ENCODE measurements at regions of chr9 and their contacts with region 1.

Region 1: DNA sequence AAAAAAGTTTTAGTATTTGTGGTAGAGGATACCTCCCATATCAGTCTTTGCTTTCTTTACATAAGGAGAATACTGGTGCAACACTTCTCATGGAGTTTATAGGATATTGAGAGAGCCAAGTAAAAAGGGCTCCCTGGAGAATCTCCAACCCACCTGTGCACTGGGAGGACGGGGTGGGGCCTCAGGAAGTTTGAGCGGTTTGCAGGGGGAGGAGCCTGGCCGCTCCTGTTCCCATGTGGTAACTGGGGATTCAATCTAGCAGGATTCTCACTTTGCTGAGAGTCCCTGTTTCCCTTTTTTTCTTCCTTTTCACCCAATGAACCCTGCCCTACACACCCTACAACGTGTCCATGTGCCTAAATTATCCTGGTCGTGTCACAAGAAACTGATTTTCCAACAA is 82.8 kb downstream of the APTX start:
- DNase-seq: no peak
- H3K4me3 ChIP-seq: no peak overlapping the region
- H3K27ac ChIP-seq: no peak overlapping the region
- H3K4me1 ChIP-seq: no peaks in the 10 kb centered on the region
- CTCF ChIP-seq: no peak

Region 2: GRCh38 chr9:32748013-32748412 is 170.6 kb before region 1 on chr9:
- CTCF ChIA-PET with region 1: no interaction called
- POLR2A ChIA-PET with region 1: no interaction called
- intact Hi-C with region 1: no loop called
- DNase-seq: no peak
- H3K4me3 ChIP-seq: no peak overlapping the region
- H3K27ac ChIP-seq: no peak overlapping the region
- H3K4me1 ChIP-seq: no peaks in the 10 kb centered on the region
- CTCF ChIP-seq: no peak

Region 3: DNA sequence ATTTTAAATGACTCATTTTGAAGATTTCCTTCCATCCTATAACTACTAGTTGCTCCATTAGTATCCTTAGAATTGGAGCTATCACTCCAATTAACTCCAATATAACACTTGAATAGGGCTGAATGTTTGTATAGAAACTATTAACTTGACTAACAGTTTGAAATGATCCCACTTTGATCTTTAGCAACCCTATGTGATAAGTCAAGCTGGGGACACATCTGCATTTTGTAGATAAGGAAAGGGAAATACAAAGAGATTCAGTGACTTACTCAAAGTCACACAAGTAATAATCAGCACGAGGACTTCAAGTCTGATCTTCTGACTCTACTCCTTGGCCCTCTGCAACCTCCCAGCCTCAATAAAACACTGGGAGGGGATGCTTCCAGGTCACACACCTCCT is 34.1 kb before region 1 on chr9:
- CTCF ChIA-PET with region 1: no interaction called
- POLR2A ChIA-PET with region 1: interaction called, 11 read pairs
- intact Hi-C with region 1: no loop called
- DNase-seq: no peak
- H3K4me3 ChIP-seq: no peak overlapping the region
- H3K27ac ChIP-seq: no peak overlapping the region
- H3K4me1 ChIP-seq: no peaks in the 10 kb centered on the region
- CTCF ChIP-seq: no peak

Measured in OCI-LY7 (cell line).